ENCODE measurements at regions of chr14 and their contacts with region 1.

Region 1: DNA sequence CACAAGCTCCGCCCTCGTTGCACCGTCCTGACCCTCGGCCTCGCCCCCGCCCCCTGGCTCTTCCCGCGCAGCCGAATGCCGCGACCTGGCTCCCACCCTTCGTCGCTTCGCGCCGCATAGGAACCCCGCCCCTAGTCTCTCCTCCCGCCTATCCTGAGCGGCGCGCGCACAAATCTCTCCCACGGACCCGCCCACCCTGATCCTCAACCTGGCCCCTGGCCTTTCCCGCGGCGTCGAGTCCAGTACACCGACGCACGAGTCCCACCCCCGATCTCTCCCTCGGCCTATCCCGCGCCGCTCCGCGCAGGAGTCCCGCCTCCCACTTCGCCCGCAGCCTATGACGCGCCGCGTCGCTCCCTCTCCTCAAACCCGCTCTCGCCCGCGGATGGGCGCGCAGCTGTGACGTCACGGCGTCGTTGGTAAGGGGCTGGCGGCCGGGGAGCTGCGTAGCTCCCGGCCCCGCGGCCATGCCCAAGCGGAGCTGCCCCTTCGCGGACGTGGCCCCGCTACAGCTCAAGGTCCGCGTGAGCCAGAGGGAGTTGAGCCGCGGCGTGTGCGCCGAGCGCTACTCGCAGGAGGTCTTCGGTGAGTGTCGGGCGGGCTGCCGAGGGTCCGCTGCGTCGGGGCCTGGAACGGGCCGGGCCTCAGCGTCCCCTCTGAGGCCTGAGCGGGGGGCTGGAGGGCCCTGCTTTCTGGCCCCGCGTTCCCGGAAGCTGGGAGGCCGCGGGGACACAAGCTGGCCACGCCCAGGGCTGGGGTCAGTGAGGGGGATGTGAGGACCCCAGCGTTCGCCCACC is at the start of gene SIVA1:
- H3K4me3 Mint-ChIP-seq: peak within 1 kb of the TSS; percentile 98
- H3K27ac Mint-ChIP-seq: peak within 1 kb of the TSS; percentile 97
- H3K4me1 Mint-ChIP-seq: peaks cover 20% of the 10 kb centered on the region
- H3K27me3 Mint-ChIP-seq: peaks cover 2% of the 10 kb centered on the region

Region 2: GRCh38 chr14:104723648-104724406 is 29.1 kb before region 1 on chr14 and contains the start of gene ADSS1:
- intact Hi-C with region 1: loop called (anchors 1 kb)
- H3K4me3 Mint-ChIP-seq: peak within 1 kb of the TSS; percentile 75
- H3K27ac Mint-ChIP-seq: peak within 1 kb of the TSS; percentile 28
- H3K4me1 Mint-ChIP-seq: peaks cover 11% of the 10 kb centered on the region
- H3K27me3 Mint-ChIP-seq: peaks cover 29% of the 10 kb centered on the region

Region 3: DNA sequence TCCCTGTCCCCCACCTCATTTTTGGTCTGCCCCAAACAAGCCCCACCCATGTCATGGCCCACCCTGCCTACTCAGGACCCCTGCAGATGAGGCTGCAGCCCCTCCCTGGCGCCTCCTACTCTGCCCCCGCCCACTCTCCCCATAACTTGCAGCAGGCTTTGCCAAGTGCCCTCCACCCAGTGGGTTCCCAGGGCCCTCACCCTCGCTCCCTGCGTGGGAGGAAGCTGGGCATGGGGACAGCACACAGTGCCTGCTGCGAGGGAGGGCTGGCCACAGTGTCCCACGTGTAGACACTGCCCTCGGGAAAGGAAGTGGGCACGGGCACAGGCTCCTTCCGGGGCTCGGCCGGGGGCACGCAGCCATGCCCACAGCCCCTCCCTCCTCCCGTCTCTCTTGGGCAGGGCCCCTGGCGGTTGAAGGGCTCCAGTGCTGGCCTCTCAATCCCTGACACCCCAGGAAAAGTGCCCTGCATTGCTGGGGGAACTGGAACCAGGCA is 33.2 kb after region 1 on chr14:
- intact Hi-C with region 1: loop called (anchors 2 kb)
- H3K4me3 Mint-ChIP-seq: peak overlapping the region; percentile 64
- H3K27ac Mint-ChIP-seq: peak overlapping the region; percentile 91
- H3K4me1 Mint-ChIP-seq: peaks cover 92% of the 10 kb centered on the region
- H3K27me3 Mint-ChIP-seq: no peaks in the 10 kb centered on the region

Region 4: GRCh38 chr14:105020815-105021655 is 268.1 kb after region 1 on chr14 and contains the start of gene CDCA4:
- intact Hi-C with region 1: loop called (anchors 5 kb)
- H3K4me3 Mint-ChIP-seq: peak within 1 kb of the TSS; percentile 86
- H3K27ac Mint-ChIP-seq: peak within 1 kb of the TSS; percentile 91
- H3K4me1 Mint-ChIP-seq: peaks cover 64% of the 10 kb centered on the region
- H3K27me3 Mint-ChIP-seq: no peaks in the 10 kb centered on the region

Measured in dendritic cell treated with granulocyte-macrophage colony-stimulating factor and Interleukin-4, amounts not matched to agents 40 ng/mL and 50 ng/mL, for 4 days (primary cell).